Activated CD4-positive, alpha-beta T cell treated with anti-CD3 and anti-CD28 coated beads for 36 hours (primary cell): ENCODE measurements at regions of chr6 and their contacts with region 1.

Region 1: GRCh38 chr6:28586962-28587745 is 61.5 kb downstream of the GPX5 start:
- DNase-seq: peak; percentile 83
- ATAC-seq: peak; percentile 87
- H3K4me3 Mint-ChIP-seq: peak overlapping the region; percentile 84
- H3K27ac Mint-ChIP-seq: peak overlapping the region; percentile 64
- H3K4me1 Mint-ChIP-seq: peaks cover 34% of the 10 kb centered on the region
- H3K27me3 Mint-ChIP-seq: peaks cover 55% of the 10 kb centered on the region

Region 2: GRCh38 chr6:28124102-28124970 is 462.8 kb before region 1 on chr6 and contains the start of gene ZSCAN16:
- CTCF ChIA-PET with region 1: no interaction called
- POLR2A ChIA-PET with region 1: no interaction called
- intact Hi-C with region 1: loop called in 1 of 2 experiments (anchors 1 kb)
- DNase-seq: peak; percentile 82
- ATAC-seq: peak; percentile 94
- H3K4me3 Mint-ChIP-seq: peak within 1 kb of the TSS; percentile 89
- H3K27ac Mint-ChIP-seq: peak within 1 kb of the TSS; percentile 91
- H3K4me1 Mint-ChIP-seq: peaks cover 43% of the 10 kb centered on the region
- H3K27me3 Mint-ChIP-seq: no peaks in the 10 kb centered on the region
- total RNA-seq, gene ZSCAN16: 2.1 to 2.6 TPM

Region 3: DNA sequence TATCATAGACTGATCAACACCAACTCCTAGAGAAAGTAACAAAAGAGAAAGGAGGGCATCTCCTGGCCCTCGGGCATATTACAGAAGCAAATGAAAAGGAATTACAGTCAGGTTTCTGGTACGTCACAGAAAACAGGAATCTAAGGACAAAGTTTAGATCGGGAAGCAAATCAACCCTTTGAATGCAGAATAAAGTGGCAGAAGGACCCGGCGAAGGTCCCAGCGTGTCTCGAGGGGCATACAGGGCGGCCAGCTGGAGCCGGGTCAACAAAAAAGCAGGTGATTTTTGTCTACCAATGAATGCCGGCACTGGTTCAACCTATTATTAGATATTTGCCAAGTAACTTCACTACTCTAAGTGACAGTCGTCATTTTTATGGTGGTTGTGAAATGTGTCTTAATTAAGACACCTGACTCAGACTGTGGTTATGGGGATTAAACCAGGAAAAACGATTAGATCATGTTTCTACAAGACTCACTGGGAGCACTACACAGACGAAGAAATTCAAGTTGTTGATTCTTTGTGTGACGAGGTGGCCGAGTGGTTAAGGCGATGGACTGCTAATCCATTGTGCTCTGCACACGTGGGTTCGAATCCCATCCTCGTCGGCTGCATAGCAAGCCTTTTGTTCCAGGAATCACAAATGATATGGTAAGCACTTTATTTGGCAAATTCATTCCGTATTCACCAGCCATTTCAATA is 374.5 kb before region 1 on chr6:
- CTCF ChIA-PET with region 1: no interaction called
- POLR2A ChIA-PET with region 1: no interaction called
- intact Hi-C with region 1: loop called in 1 of 2 experiments (anchors 5 kb)
- DNase-seq: peak; percentile 80
- ATAC-seq: peak; percentile 71
- H3K4me3 Mint-ChIP-seq: peak overlapping the region; percentile 64
- H3K27ac Mint-ChIP-seq: peak overlapping the region; percentile 33
- H3K4me1 Mint-ChIP-seq: peaks cover 22% of the 10 kb centered on the region
- H3K27me3 Mint-ChIP-seq: peaks cover 71% of the 10 kb centered on the region

Region 4: DNA sequence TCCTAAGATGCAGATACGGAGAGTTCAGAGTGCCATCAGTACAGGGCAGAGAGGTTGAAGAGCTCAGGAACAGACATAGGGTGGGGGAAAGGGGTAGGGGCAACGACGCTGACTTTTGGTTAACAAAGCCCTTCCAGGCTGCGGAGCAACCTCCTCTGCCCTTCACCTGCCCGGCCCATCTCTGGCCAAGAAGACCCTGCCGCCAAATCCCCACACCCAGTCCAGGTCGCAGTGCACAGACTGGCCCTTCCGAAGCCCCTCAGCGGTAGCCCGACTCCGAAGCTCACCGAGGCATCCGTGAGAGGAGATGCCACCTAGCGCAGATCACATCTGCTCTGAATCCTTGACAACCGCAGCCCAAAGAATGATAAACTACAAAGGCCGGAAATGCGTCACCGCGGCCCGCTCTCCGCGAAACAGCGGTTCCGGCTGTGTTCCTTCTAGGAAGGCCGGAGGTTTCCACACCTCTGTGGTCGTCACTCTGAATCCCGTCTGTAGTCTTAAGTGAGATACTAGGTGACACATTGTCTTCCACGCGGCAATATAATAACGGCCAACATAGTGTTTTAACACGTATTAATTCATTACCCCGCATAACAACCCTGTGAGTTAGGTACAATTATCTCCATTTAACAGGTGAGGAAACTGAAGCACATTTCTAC is 143.9 kb before region 1 on chr6 and contains the start of gene ZSCAN23:
- CTCF ChIA-PET with region 1: no interaction called
- POLR2A ChIA-PET with region 1: no interaction called
- intact Hi-C with region 1: loop called in 1 of 2 experiments (anchors 5 kb)
- DNase-seq: peak; percentile 91
- ATAC-seq: peak; percentile 92
- H3K4me3 Mint-ChIP-seq: peak within 1 kb of the TSS; percentile 96
- H3K27ac Mint-ChIP-seq: peak within 1 kb of the TSS; percentile 91
- H3K4me1 Mint-ChIP-seq: peaks cover 32% of the 10 kb centered on the region
- H3K27me3 Mint-ChIP-seq: peaks cover 16% of the 10 kb centered on the region
- total RNA-seq, gene ZSCAN23: 1.9 to 2.9 TPM

Region 5: GRCh38 chr6:28489366-28490204 is 97.6 kb before region 1 on chr6:
- CTCF ChIA-PET with region 1: no interaction called
- POLR2A ChIA-PET with region 1: no interaction called
- intact Hi-C with region 1: loop called (anchors 2 to 10 kb)
- DNase-seq: peak; percentile 80
- ATAC-seq: peak; percentile 80
- H3K4me3 Mint-ChIP-seq: peak overlapping the region; percentile 72
- H3K27ac Mint-ChIP-seq: peak overlapping the region; percentile 79
- H3K4me1 Mint-ChIP-seq: peaks cover 16% of the 10 kb centered on the region
- H3K27me3 Mint-ChIP-seq: peaks cover 44% of the 10 kb centered on the region

Region 6: GRCh38 chr6:28615955-28616747 is 29.0 kb after region 1 on chr6:
- CTCF ChIA-PET with region 1: no interaction called
- POLR2A ChIA-PET with region 1: no interaction called
- intact Hi-C with region 1: no loop called
- DNase-seq: no peak
- ATAC-seq: no peak
- H3K4me3 Mint-ChIP-seq: no peak overlapping the region
- H3K27ac Mint-ChIP-seq: no peak overlapping the region
- H3K4me1 Mint-ChIP-seq: no peaks in the 10 kb centered on the region
- H3K27me3 Mint-ChIP-seq: peaks cover 48% of the 10 kb centered on the region

Region 7: GRCh38 chr6:28657769-28658465 is 70.8 kb after region 1 on chr6:
- CTCF ChIA-PET with region 1: no interaction called
- POLR2A ChIA-PET with region 1: interaction called, 3 read pairs
- intact Hi-C with region 1: loop called (anchors 5 kb)
- DNase-seq: peak; percentile 84
- ATAC-seq: peak; percentile 94
- H3K4me3 Mint-ChIP-seq: peak overlapping the region; percentile 77
- H3K27ac Mint-ChIP-seq: peak overlapping the region; percentile 76
- H3K4me1 Mint-ChIP-seq: peaks cover 24% of the 10 kb centered on the region
- H3K27me3 Mint-ChIP-seq: peaks cover 50% of the 10 kb centered on the region